ENCODE measurements at regions of chr16 and their contacts with region 1.

Region 1: GRCh38 chr16:49183911-49184310 is 97.7 kb downstream of the CBLN1 start:
- DNase-seq: no peak
- ATAC-seq: peak in 3 of 4 donors; percentile 61 to 69 (median 62)
- H3K4me3 ChIP-seq: no peak overlapping the region
- H3K27ac ChIP-seq: no peak overlapping the region
- H3K4me1 ChIP-seq: no peaks in the 10 kb centered on the region
- H3K27me3 ChIP-seq: no peaks in the 10 kb centered on the region
- CTCF ChIP-seq: peak in 9 of 12 donors; percentile 24 to 51 (median 34)
- POLR2A ChIP-seq: no peak

Region 2: GRCh38 chr16:48911700-48912099 is 272.2 kb before region 1 on chr16:
- intact Hi-C with region 1: loop called in 5 of 10 experiments (anchors 5 to 10 kb)
- DNase-seq: no peak
- ATAC-seq: no peak
- H3K4me3 ChIP-seq: no peak overlapping the region
- H3K27ac ChIP-seq: no peak overlapping the region
- H3K4me1 ChIP-seq: no peaks in the 10 kb centered on the region
- H3K27me3 ChIP-seq: peaks cover 0 to 11% (median 0%) of the 10 kb centered on the region in 9 donors
- CTCF ChIP-seq: peak in 7 of 12 donors; percentile 19 to 40 (median 31)
- POLR2A ChIP-seq: no peak

Measured in heart left ventricle (tissue), 16 donors.